HCT116 (cell line): ENCODE measurements at regions of chr19 and their contacts with region 1.

Region 1: DNA sequence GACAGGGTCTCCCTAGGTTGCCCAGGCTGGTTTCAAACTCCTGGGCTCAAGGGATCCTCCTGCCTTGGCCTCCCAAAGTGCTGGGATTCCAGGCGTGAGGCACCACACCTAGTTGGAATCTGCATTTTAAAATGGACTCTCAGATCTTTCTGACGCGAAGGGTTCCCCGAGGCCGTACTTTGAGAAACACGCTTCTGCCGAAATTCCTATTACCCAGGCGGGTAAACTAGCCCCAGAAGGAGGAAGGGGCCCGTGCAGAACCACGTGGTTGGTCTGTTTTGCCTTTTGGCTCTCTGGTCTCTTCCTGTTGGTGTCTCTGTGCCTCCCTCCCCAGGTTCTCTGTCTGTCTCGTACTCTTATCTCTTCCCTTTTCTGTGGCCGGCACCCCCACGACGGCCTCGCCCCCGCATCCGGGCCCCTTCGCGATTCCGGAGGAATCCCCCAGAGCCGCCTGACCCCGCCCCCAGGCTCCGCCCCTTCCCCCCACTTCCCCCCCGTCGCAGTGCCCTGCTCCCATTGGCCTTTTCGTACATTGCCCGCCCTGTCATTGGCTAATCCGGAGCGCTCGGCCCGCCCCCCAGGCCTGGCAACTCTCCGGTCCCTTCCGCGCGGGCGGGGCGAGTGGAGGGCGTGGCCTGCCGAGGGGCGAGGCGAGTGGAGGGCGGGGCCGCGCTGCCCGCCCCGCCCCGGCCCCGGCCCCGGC is at the start of gene TNFAIP8L1:
- DNase-seq: peak; percentile 88
- ATAC-seq: peak; percentile 87
- H3K4me3 ChIP-seq: peak within 1 kb of the TSS; percentile 76 to 96
- H3K27ac ChIP-seq: peak within 1 kb of the TSS; percentile 82
- H3K4me1 ChIP-seq: peaks cover 29 to 55% of the 10 kb centered on the region in 2 experiments
- H3K27me3 ChIP-seq: no peaks in the 10 kb centered on the region
- CTCF ChIP-seq: no peak
- POLR2A ChIP-seq: no peak
- RAD21 ChIP-seq: no peak
- total RNA-seq, gene TNFAIP8L1: 22.2 TPM

Region 2: DNA sequence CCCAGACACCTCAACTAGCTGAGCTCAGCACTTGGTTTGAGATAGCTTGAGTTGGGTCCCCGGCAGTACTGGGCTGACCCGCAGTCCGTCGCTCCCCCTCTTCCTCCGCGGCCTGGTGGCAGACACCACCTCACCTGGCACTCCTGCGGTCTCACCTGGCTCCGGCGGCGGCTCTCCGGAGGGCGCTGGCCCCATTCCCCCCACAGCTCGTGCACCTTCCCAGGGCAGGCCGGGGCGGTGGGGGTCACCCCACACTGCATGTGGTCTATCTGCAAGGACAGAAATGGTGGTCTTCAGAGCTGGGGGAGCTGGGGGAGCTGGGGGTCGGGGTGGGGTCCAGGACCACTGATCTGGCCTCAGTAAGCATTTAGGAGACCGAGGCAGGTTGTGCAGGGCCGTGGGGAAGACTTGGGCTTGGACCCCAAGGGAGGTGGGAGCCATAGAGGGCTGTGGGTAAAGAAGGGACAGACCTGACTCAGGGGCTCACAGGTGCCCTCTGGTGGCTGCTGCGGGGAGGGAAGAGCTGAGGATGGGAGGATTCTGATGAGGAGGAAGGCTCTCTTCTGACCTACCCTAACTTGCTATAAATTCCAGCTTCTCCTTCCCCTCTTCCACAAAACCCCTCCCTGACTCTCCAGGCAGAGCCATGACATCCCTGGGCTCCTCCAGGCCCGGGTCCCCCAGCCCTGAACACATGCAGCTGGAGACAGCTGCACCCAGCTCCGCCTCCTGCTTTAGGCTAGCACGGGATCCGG is 114.0 kb before region 1 on chr19:
- CTCF ChIA-PET with region 1: interaction called, 20 read pairs
- POLR2A ChIA-PET with region 1: no interaction called
- RAD21 ChIA-PET with region 1: interaction called in 1 of 2 experiments, 3 read pairs
- intact Hi-C with region 1: loop called (anchors 2 kb)
- DNase-seq: peak; percentile 8
- ATAC-seq: peak; percentile 88
- H3K4me3 ChIP-seq: no peak overlapping the region
- H3K27ac ChIP-seq: no peak overlapping the region
- H3K4me1 ChIP-seq: peaks cover 0 to 7% of the 10 kb centered on the region in 2 experiments; a peak in 1 of 4 replicates
- H3K27me3 ChIP-seq: no peaks in the 10 kb centered on the region
- CTCF ChIP-seq: peak; percentile 48 to 96 (median 83); a peak in 5 of 6 replicates
- POLR2A ChIP-seq: no peak
- RAD21 ChIP-seq: peak; percentile 50

Region 3: GRCh38 chr19:4557971-4558941 is 80.7 kb before region 1 on chr19:
- CTCF ChIA-PET with region 1: interaction called, 5 read pairs
- POLR2A ChIA-PET with region 1: no interaction called
- RAD21 ChIA-PET with region 1: no interaction called
- intact Hi-C with region 1: loop called (anchors 1 kb)
- DNase-seq: no peak
- ATAC-seq: no peak
- H3K4me3 ChIP-seq: no peak overlapping the region
- H3K27ac ChIP-seq: peak overlapping the region; percentile 40; the same call in 1 of the 2 replicates
- H3K4me1 ChIP-seq: peaks cover 8 to 26% of the 10 kb centered on the region in 2 experiments
- H3K27me3 ChIP-seq: no peaks in the 10 kb centered on the region
- CTCF ChIP-seq: peak; percentile 69 to 97 (median 82)
- POLR2A ChIP-seq: no peak
- RAD21 ChIP-seq: peak; percentile 59

Region 4: DNA sequence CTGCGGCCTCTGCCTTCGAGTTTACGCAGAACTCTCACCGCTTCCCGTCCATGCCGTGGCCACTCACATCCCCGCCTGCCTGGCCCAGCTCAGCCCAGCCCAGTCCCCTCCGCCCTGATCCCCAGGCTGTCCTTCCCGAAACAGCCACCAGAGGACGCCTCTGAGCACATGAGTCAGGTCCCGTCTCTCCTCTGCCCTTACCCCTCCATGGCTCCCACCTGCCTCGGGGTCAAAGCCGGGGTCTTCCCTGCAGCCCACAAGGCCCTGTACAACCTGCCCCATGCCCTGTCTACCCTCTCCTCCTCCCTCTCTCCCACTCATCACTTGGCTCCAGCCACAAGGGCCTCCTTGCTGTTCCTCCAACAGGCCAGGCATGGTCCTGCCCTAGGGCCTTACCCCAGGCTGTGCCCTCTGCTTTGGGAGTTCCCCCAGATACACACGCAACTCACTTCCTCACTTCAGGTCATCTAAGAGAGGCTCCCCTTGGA is 71.4 kb before region 1 on chr19:
- CTCF ChIA-PET with region 1: interaction called, 29 read pairs
- POLR2A ChIA-PET with region 1: no interaction called
- RAD21 ChIA-PET with region 1: interaction called in 1 of 2 experiments, 4 read pairs
- intact Hi-C with region 1: no loop called
- DNase-seq: no peak
- ATAC-seq: peak; percentile 82
- H3K4me3 ChIP-seq: no peak overlapping the region
- H3K27ac ChIP-seq: peak overlapping the region; percentile 6; the same call in 1 of the 2 replicates
- H3K4me1 ChIP-seq: peaks cover 17 to 39% of the 10 kb centered on the region in 2 experiments
- H3K27me3 ChIP-seq: no peaks in the 10 kb centered on the region
- CTCF ChIP-seq: peak; percentile 57 to 97 (median 95)
- POLR2A ChIP-seq: no peak
- RAD21 ChIP-seq: no peak; the same call in none of the 2 replicates

Region 5: DNA sequence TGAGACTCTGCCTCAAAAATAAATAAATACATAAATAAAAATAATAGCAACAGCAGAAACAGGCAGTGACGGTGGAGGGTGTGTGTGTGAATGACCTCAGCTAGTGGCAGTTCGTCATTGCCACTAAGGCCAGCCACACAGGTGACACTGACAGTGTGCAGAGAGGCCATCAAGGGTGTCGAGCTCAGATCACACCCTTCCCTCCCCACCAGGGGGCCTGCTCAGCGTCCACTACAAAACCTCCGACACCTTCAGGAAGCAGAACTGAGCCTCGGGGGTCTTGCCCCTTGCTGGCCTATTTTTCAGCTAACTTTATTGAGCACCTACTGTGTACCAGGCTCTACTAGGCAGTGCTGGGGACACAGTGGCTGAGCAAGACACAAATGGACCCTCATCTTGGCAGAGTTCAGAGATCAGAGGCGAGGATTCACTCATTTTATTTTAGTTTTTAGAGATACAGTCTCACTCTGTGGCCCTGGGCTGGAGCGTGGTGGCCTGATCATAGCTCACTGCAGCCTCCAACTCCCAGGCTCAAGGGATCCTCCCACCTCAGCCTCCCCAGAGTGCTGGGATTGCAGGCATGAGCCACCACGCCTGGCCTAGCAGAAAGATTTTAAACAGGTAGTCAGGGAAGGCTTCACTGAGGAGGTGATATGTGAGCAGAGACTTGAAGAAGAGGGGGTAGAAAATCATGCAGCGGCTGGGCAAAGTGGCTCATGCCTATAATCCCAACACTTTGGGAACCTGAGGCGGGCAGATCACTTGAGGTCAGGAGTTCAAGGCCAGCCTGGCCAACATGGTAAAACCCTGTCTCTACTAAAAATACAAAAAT is 49.2 kb before region 1 on chr19:
- CTCF ChIA-PET with region 1: interaction called, 15 read pairs
- POLR2A ChIA-PET with region 1: no interaction called
- RAD21 ChIA-PET with region 1: interaction called in 1 of 2 experiments, 13 read pairs
- intact Hi-C with region 1: no loop called
- DNase-seq: no peak
- ATAC-seq: peak; percentile 90
- H3K4me3 ChIP-seq: no peak overlapping the region
- H3K27ac ChIP-seq: no peak overlapping the region
- H3K4me1 ChIP-seq: peaks cover 11 to 25% of the 10 kb centered on the region in 2 experiments; a peak in 3 of 4 replicates
- H3K27me3 ChIP-seq: no peaks in the 10 kb centered on the region
- CTCF ChIP-seq: peak; percentile 57 to 74 (median 64); a peak in 5 of 6 replicates
- POLR2A ChIP-seq: no peak
- RAD21 ChIP-seq: no peak

Region 6: GRCh38 chr19:4781801-4782200 is 142.8 kb after region 1 on chr19:
- CTCF ChIA-PET with region 1: no interaction called
- POLR2A ChIA-PET with region 1: no interaction called
- RAD21 ChIA-PET with region 1: no interaction called
- intact Hi-C with region 1: no loop called
- DNase-seq: no peak
- ATAC-seq: no peak
- H3K4me3 ChIP-seq: no peak overlapping the region
- H3K27ac ChIP-seq: no peak overlapping the region
- H3K4me1 ChIP-seq: peaks cover 5 to 6% of the 10 kb centered on the region in 2 experiments; a peak in 3 of 4 replicates
- H3K27me3 ChIP-seq: no peaks in the 10 kb centered on the region
- CTCF ChIP-seq: no peak
- POLR2A ChIP-seq: no peak
- RAD21 ChIP-seq: no peak